Heart left ventricle (tissue), 16 donors: ENCODE measurements at regions of chr1 and their contacts with region 1.

Region 1: GRCh38 chr1:153599847-153600246 is 13.1 kb downstream of the S100A16 start:
- DNase-seq: no peak
- ATAC-seq: no peak
- H3K4me3 ChIP-seq: no peak overlapping the region
- H3K27ac ChIP-seq: no peak overlapping the region
- H3K4me1 ChIP-seq: peaks cover 0 to 18% (median 0%) of the 10 kb centered on the region in 12 donors
- H3K27me3 ChIP-seq: no peaks in the 10 kb centered on the region
- CTCF ChIP-seq: no peak
- POLR2A ChIP-seq: no peak

Region 2: GRCh38 chr1:153649863-153650235 is 50.0 kb after region 1 on chr1:
- intact Hi-C with region 1: loop called in 1 of 10 experiments (anchors 5 kb)
- DNase-seq: peak in 4 of 5 donors; percentile 46 to 82 (median 78)
- ATAC-seq: peak; percentile 57 to 87 (median 76)
- H3K4me3 ChIP-seq: no peak overlapping the region
- H3K27ac ChIP-seq: peak overlapping the region in 2 of 12 donors; percentile 12 to 28
- H3K4me1 ChIP-seq: peaks cover 0 to 46% (median 9%) of the 10 kb centered on the region in 12 donors
- H3K27me3 ChIP-seq: no peaks in the 10 kb centered on the region
- CTCF ChIP-seq: no peak
- POLR2A ChIP-seq: no peak

Region 3: GRCh38 chr1:153670859-153671627 is 71.2 kb after region 1 on chr1 and contains the start of gene ILF2:
- intact Hi-C with region 1: no loop called
- DNase-seq: peak; percentile 97 to 98 (median 98)
- ATAC-seq: peak; percentile 95 to 98 (median 97)
- H3K4me3 ChIP-seq: peak within 1 kb of the TSS; percentile 49 to 93 (median 82)
- H3K27ac ChIP-seq: peak within 1 kb of the TSS; percentile 6 to 90 (median 80)
- H3K4me1 ChIP-seq: peaks cover 6 to 26% (median 14%) of the 10 kb centered on the region in 12 donors
- H3K27me3 ChIP-seq: no peaks in the 10 kb centered on the region
- CTCF ChIP-seq: peak in 6 of 12 donors; percentile 11 to 53 (median 39)
- POLR2A ChIP-seq: peak; percentile 81 to 91
- total RNA-seq, gene ILF2: 65.0 to 92.3 (median 74.2) TPM

Region 4: DNA sequence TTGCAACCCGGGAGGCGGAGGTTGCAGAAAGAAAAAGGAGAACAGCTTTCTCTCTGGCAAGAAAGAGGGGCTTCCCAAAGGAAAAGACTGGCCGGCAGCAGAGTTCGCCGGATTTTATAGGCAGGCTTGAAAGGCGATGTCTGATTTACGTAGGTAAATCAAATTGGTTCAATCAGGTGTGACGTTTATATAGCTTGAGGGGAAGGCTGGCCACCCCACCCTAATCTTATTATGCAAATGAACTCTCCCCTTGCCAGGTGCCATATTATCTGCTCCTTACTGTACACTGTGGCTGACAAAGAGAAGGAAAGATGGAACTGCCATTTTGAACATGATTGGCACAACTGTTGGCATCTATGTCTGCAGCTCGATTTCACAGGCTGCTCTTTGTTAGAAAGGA is 111.2 kb after region 1 on chr1:
- intact Hi-C with region 1: no loop called
- DNase-seq: no peak
- ATAC-seq: no peak
- H3K4me3 ChIP-seq: no peak overlapping the region
- H3K27ac ChIP-seq: no peak overlapping the region
- H3K4me1 ChIP-seq: no peaks in the 10 kb centered on the region
- H3K27me3 ChIP-seq: peaks cover 0 to 3% (median 0%) of the 10 kb centered on the region in 9 donors
- CTCF ChIP-seq: no peak
- POLR2A ChIP-seq: no peak

Region 5: GRCh38 chr1:153903841-153904455 is 304.1 kb after region 1 on chr1:
- intact Hi-C with region 1: no loop called
- DNase-seq: no peak
- ATAC-seq: no peak
- H3K4me3 ChIP-seq: no peak overlapping the region
- H3K27ac ChIP-seq: no peak overlapping the region
- H3K4me1 ChIP-seq: peaks cover 0 to 25% (median 5%) of the 10 kb centered on the region in 12 donors
- H3K27me3 ChIP-seq: no peaks in the 10 kb centered on the region
- CTCF ChIP-seq: no peak
- POLR2A ChIP-seq: no peak